Panc1 (cell line): ENCODE measurements at regions of chr5 and their contacts with region 1.

Region 1: DNA sequence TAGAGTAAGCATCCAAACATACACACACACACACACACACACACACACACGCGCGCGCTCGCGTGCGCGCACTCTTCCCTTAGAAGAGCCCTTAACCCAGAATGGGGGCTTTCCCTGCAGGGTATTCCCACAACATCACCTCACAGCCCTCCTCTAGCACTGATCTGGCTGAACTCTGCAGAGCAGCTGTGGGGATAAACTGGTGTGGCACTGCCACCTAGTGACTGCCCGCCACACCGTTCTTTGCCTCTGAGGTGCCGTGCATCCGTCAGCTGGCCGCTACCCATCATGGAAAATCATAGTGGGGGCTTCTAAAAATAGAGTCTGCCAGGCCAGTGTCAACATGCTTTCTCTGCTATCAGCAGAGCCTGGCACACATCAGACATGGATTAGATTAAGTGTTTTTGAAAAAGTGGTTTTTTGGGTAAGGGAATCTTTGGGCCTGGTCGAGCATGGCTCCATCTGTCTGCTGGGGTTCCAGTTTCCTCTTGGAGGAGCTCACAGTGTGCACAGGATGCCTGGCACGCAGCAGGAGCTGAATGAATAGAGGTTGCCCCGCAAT is 88.1 kb downstream of the KCNN2 start:
- DNase-seq: peak; percentile 35
- ATAC-seq: peak; percentile 99
- H3K4me3 ChIP-seq: no peak overlapping the region
- H3K27ac ChIP-seq: no peak overlapping the region
- H3K4me1 ChIP-seq: no peaks in the 10 kb centered on the region; the same call in 1 of the 2 replicates
- H3K27me3 ChIP-seq: peaks cover 5% of the 10 kb centered on the region; the same call in 1 of the 2 replicates
- CTCF ChIP-seq: peak; percentile 82

Region 2: GRCh38 chr5:113612060-113612496 is 837.9 kb before region 1 on chr5:
- CTCF ChIA-PET with region 1: interaction called, 10 read pairs
- POLR2A ChIA-PET with region 1: no interaction called
- in situ Hi-C with region 1: no loop called
- intact Hi-C with region 1: loop called (anchors 5 kb)
- DNase-seq: no peak
- ATAC-seq: peak; percentile 68; the same call in 1 of the 2 replicates
- H3K4me3 ChIP-seq: no peak overlapping the region
- H3K27ac ChIP-seq: no peak overlapping the region
- H3K4me1 ChIP-seq: no peaks in the 10 kb centered on the region
- H3K27me3 ChIP-seq: no peaks in the 10 kb centered on the region
- CTCF ChIP-seq: peak; percentile 64

Region 3: GRCh38 chr5:113678924-113679575 is 770.9 kb before region 1 on chr5:
- CTCF ChIA-PET with region 1: interaction called, 4 read pairs
- POLR2A ChIA-PET with region 1: interaction called, 5 read pairs
- in situ Hi-C with region 1: no loop called
- intact Hi-C with region 1: loop called (anchors 1 kb)
- DNase-seq: peak; percentile 18
- ATAC-seq: peak; percentile 88
- H3K4me3 ChIP-seq: no peak overlapping the region
- H3K27ac ChIP-seq: no peak overlapping the region
- H3K4me1 ChIP-seq: no peaks in the 10 kb centered on the region
- H3K27me3 ChIP-seq: peaks cover 3% of the 10 kb centered on the region; the same call in 1 of the 2 replicates
- CTCF ChIP-seq: peak; percentile 72

Region 4: DNA sequence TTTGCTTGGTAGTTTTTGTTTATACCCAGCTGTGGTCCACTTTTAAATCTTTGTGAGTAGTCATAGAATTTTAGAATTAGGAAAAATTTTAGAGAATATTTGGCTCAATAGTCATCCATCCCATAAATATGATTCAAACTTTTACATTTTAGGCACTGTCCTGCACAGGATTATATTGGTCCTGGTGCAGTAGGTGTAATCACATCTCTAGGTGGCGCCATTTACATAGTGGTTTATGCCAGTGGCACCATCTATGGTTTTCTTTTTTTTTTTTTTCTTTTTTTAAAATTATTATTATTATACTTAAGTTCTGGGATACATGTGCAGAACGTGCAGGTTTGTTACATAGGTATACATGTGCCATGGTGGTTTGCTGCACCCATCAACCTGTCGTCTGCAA is 348.8 kb before region 1 on chr5:
- CTCF ChIA-PET with region 1: no interaction called
- POLR2A ChIA-PET with region 1: no interaction called
- in situ Hi-C with region 1: no loop called
- intact Hi-C with region 1: loop called (anchors 5 kb)
- DNase-seq: no peak
- ATAC-seq: no peak
- H3K4me3 ChIP-seq: no peak overlapping the region
- H3K27ac ChIP-seq: no peak overlapping the region
- H3K4me1 ChIP-seq: no peaks in the 10 kb centered on the region
- H3K27me3 ChIP-seq: no peaks in the 10 kb centered on the region
- CTCF ChIP-seq: peak; percentile 41; the same call in 1 of the 2 replicates

Region 5: DNA sequence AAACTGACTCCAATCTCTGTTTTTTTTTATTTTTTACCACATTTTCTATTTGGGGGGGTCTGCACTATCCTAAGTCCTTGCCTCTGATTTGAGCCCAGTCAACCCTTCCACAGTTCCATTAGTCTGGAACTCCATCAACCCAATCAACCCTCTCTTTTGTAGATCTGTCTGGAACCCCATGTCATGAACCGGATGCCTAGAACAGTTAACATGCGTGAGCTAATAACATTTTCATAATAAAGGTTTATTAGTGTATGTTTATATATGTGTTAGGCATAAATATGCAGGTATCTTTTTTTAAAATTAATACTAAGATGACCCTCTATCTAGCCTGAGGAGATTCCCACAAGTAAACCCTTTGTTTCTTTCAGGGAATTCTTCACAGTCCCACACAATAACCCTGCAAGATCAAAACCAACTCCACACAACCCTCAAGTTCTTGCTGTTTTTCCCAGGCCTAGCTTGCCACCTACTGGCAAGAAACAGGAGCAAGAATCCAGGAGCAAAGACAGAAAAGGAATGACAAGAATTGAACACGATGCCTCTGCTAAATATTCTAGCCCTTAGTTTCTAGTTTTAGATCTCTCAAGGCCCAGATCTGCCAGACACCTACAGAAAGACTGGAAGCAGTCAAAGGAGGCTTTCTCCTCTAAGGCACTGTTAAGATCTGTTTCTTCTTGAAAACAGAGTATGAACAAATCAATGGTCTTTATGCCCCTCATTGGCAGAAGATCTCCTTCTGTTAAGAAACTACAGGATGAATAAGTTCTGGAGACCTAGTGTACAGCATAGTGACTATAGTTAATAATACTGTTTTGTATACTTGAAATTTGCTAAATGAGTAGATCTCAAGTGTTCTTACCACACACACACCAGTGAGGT is 619.4 kb after region 1 on chr5:
- CTCF ChIA-PET with region 1: no interaction called
- POLR2A ChIA-PET with region 1: no interaction called
- in situ Hi-C with region 1: no loop called
- intact Hi-C with region 1: loop called (anchors 10 kb)
- DNase-seq: no peak
- ATAC-seq: peak; percentile 83
- H3K4me3 ChIP-seq: no peak overlapping the region
- H3K27ac ChIP-seq: no peak overlapping the region
- H3K4me1 ChIP-seq: no peaks in the 10 kb centered on the region
- H3K27me3 ChIP-seq: no peaks in the 10 kb centered on the region
- CTCF ChIP-seq: peak; percentile 76